Posterior vena cava (tissue), 2 donors: ENCODE measurements at regions of chr15 and their contacts with region 1.

Region 1: DNA sequence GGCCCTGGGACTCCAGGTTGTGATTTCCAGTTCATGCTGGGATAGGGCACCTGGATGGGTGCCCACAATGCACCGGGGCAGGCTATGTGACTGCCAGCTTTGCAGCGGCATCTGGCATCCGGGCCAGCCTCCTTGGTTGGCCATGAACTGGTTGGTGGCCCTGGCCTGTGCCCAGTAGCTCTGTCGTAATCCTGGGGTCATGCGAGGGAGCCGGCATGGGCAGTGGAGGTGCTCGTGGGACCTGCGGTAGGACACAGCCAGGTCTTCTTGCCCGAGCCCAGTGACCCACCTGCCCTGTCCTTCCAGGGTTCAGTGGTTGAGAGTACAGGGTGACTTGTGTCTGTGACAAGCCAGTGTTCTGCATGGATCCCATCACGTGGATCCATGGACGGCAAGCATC is 237.9 kb downstream of the SNRPN start:
- DNase-seq: no peak

Region 2: DNA sequence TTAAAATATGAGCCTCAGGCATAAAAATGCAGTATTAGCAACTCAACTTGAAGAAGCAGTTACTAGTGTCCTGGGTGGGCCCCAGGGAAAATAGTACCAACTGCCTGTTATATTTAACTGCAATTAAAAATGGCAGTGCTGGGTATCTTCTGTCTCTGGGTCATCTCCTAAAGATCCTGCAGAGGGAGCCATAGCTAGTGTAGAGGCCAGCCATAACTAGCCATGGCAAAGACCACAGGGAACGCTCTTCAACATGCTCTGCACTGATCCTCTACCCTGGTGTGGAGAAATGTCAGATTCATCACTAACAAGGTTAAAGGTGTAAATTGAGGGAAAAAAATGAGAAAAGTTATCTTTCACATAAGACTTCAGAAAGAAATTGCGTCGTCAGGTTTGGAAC is 56.5 kb before region 1 on chr15:
- intact Hi-C with region 1: no loop called
- DNase-seq: no peak

Region 3: DNA sequence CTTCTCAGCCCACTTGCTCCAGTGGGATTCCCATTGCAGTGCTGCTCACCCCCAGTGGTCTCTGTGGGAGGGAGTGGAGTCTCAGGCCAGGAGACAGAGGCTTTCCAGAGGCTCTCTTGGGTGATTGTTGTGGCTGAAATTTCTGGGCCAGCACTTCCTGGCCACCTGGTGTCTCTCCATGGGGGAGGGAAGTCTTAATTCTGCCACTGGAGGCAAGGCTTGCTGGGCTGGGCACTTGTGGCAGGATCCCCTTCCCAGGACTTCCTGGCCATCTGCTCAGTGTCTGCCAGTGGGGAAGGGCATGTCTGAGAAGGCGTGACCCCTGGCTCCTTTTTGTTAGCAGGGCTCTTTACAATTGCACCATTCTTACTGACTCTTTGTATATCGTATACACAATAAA is 1228.4 kb after region 1 on chr15:
- intact Hi-C with region 1: loop called in 1 of 2 experiments (anchors 10 kb)
- DNase-seq: no peak